Right ventricle myocardium inferior (tissue), 1 donor: ENCODE measurements at regions of chr20 and their contacts with region 1.

Region 1: GRCh38 chr20:37697314-37697713 is 3.5 kb downstream of the CTNNBL1 start:
- DNase-seq: no peak
- ATAC-seq: no peak

Region 2: GRCh38 chr20:37737826-37738420 is 40.6 kb after region 1 on chr20:
- intact Hi-C with region 1: loop called (anchors 5 kb)
- DNase-seq: no peak
- ATAC-seq: peak; percentile 60